ENCODE measurements at regions of chr1 and their contacts with region 1.

Region 1: GRCh38 chr1:159821171-159821867 is 5.4 kb upstream of the SLAMF8 start:
- DNase-seq: no peak
- H3K4me3 ChIP-seq: no peak overlapping the region
- H3K27ac ChIP-seq: no peak overlapping the region
- H3K4me1 ChIP-seq: no peaks in the 10 kb centered on the region
- H3K27me3 ChIP-seq: no peaks in the 10 kb centered on the region
- CTCF ChIP-seq: no peak

Region 2: DNA sequence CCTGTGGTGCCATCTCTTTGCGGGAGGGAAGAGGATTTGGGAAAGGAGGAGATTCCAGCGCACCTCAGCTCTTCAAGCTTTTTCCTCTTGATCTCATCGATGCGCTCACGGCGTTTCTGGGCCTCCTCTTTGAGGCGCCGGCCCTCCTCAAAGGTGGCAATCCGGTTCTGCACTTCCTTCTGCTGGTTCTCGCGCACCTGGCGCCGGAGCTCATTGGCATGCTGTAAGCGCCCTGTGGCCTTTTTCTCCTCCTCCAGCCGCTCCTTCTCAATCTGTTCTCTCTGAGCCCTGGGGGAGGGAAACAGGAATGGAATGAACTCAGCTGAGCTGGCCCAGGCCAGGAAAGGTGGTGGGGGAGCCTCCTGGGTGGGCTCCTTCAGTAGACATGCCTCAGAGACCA is 51.6 kb after region 1 on chr1:
- intact Hi-C with region 1: loop called (anchors 5 kb)
- DNase-seq: no peak
- H3K4me3 ChIP-seq: no peak overlapping the region
- H3K27ac ChIP-seq: no peak overlapping the region
- H3K4me1 ChIP-seq: no peaks in the 10 kb centered on the region
- H3K27me3 ChIP-seq: no peaks in the 10 kb centered on the region
- CTCF ChIP-seq: no peak